ENCODE measurements at regions of chrX and their contacts with region 1.

Region 1: GRCh38 chrX:42943051-42943974 is 165.3 kb upstream of the PPP1R2C start:
- DNase-seq: peak; percentile 92
- H3K4me3 ChIP-seq: peak overlapping the region; percentile 35
- H3K27ac ChIP-seq: peak overlapping the region; percentile 100
- H3K4me1 ChIP-seq: peaks cover 42% of the 10 kb centered on the region
- CTCF ChIP-seq: peak; percentile 43; the same call in 1 of the 2 replicates

Region 2: GRCh38 chrX:41923257-41923969 is 1019.9 kb before region 1 on chrX and contains the start of gene CASK:
- CTCF ChIA-PET with region 1: no interaction called
- POLR2A ChIA-PET with region 1: no interaction called
- intact Hi-C with region 1: loop called (anchors 5 kb)
- DNase-seq: peak; percentile 90
- H3K4me3 ChIP-seq: peak within 1 kb of the TSS; percentile 84
- H3K27ac ChIP-seq: peak within 1 kb of the TSS; percentile 57
- H3K4me1 ChIP-seq: peaks cover 19% of the 10 kb centered on the region
- CTCF ChIP-seq: no peak
- total RNA-seq, gene CASK: 18.6 and 27.9 TPM in 2 replicates

Region 3: GRCh38 chrX:42678125-42678524 is 265.2 kb before region 1 on chrX:
- CTCF ChIA-PET with region 1: no interaction called
- POLR2A ChIA-PET with region 1: no interaction called
- intact Hi-C with region 1: loop called (anchors 5 kb)
- DNase-seq: peak; percentile 12
- H3K4me3 ChIP-seq: no peak overlapping the region
- H3K27ac ChIP-seq: no peak overlapping the region
- H3K4me1 ChIP-seq: peaks cover 7% of the 10 kb centered on the region
- CTCF ChIP-seq: 0 out of 2 replicates have a peak, but pooled peaks have one; percentile 19

Region 4: DNA sequence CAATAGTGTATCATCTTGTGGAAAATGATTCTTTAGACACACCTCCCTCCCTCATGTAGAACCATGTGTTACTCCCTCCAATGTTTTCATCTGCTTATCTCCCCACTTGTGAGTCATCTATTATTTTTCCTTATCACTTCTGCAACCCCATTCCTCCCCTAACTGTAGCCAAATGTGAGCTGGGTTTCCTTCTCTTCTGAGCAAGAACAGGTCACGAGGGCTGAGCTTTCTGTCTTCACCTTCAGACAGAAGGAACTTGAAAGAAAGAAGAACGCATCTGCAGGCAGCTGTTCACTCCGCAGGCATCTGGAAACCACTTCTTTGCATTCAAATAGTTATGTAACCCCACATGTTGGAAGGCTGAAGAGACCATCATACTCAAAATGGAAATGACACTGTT is 167.1 kb before region 1 on chrX:
- CTCF ChIA-PET with region 1: no interaction called
- POLR2A ChIA-PET with region 1: interaction called, 3 read pairs
- intact Hi-C with region 1: loop called (anchors 1 kb)
- DNase-seq: peak; percentile 66
- H3K4me3 ChIP-seq: no peak overlapping the region
- H3K27ac ChIP-seq: peak overlapping the region; percentile 51
- H3K4me1 ChIP-seq: peaks cover 54% of the 10 kb centered on the region
- CTCF ChIP-seq: no peak

Region 5: DNA sequence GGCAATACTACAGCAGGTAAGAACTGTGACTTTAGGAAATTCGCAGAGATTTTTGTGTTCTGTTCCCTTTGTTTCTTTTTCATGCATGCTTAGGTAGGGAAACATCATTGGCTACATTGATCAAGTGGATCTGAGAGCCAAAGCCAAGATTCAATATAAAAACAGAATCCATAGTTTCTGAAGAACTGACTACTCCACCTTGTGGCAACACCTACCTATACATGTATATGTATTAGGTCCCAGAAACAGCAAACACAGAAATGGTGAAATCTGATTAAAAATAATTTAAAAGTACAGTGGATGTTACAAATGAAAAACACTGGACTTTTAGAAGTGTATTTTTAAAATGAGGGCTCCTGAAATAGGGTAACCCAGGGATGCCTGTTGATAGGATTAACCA is 390.2 kb after region 1 on chrX:
- CTCF ChIA-PET with region 1: no interaction called
- POLR2A ChIA-PET with region 1: no interaction called
- intact Hi-C with region 1: loop called (anchors 10 kb)
- DNase-seq: peak; percentile 29
- H3K4me3 ChIP-seq: no peak overlapping the region
- H3K27ac ChIP-seq: no peak overlapping the region
- H3K4me1 ChIP-seq: no peaks in the 10 kb centered on the region
- CTCF ChIP-seq: peak; percentile 42; the same call in 1 of the 2 replicates